Psoas muscle (tissue), 8 donors: ENCODE measurements at regions of chr2 and their contacts with region 1.

Region 1: DNA sequence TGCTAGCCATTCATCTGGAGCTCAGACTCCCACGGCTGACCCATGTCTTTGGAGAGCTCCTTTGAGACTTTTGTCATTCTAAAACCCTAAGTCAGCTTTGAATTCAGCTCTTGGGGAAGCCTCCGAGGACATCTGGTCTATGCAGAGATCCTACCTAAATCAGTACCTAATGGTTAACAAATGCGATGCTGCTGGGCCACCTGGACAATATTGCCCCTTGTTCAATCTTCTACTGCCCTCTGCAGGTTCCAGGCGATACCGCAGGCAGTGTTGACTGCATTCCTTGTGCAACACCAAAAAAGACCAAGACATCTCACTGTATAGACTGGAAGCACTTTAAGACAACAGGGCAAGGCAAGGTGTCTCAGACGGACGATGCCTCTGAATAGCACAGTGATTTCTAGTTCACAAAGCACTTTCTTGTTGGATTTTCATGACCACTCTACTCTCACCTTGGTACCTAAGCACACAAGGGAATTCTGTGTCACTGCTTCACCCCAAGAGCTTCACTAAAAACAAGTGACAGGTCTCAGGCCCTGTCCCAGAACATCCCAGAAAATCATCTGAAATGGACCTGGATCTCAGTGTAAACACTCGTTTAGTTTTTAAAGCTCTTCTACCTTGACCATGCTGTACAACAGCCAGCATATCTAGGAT is 80.9 kb downstream of the XDH start:
- DNase-seq: peak; percentile 70 to 86
- ATAC-seq: peak; percentile 84 to 95 (median 92)
- H3K4me3 ChIP-seq: no peak overlapping the region
- H3K27ac ChIP-seq: peak overlapping the region; percentile 50
- H3K4me1 ChIP-seq: peaks cover 5% of the 10 kb centered on the region
- H3K27me3 ChIP-seq: no peaks in the 10 kb centered on the region
- CTCF ChIP-seq: peak; percentile 97

Region 2: DNA sequence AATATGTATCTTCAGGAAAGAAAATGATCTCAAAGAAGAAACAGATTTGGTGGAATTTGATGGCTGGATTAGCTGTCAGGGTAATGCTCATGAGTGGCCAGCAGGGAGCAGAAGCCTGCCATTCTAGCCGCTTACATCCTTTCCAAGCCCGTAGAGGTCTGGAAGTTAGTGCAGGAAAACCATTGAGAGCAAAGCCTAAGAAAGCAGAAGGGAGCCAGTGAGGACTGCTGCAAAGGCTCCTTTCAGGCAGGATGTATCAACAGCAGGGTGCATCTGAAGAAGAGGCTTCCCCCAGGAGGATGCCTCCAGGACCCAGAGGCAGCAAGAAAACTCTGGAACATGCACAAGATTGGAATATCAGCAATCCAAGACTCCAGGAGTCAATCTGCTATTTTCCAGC is 1125.2 kb before region 1 on chr2:
- intact Hi-C with region 1: loop called in 1 of 2 experiments (anchors 10 kb)
- DNase-seq: peak; percentile 51 to 63
- ATAC-seq: peak; percentile 81 to 96 (median 88)
- H3K4me3 ChIP-seq: no peak overlapping the region
- H3K27ac ChIP-seq: no peak overlapping the region
- H3K4me1 ChIP-seq: no peaks in the 10 kb centered on the region
- H3K27me3 ChIP-seq: peaks cover 0 to 2% (median 0%) of the 10 kb centered on the region in 3 donors
- CTCF ChIP-seq: peak; percentile 92

Region 3: DNA sequence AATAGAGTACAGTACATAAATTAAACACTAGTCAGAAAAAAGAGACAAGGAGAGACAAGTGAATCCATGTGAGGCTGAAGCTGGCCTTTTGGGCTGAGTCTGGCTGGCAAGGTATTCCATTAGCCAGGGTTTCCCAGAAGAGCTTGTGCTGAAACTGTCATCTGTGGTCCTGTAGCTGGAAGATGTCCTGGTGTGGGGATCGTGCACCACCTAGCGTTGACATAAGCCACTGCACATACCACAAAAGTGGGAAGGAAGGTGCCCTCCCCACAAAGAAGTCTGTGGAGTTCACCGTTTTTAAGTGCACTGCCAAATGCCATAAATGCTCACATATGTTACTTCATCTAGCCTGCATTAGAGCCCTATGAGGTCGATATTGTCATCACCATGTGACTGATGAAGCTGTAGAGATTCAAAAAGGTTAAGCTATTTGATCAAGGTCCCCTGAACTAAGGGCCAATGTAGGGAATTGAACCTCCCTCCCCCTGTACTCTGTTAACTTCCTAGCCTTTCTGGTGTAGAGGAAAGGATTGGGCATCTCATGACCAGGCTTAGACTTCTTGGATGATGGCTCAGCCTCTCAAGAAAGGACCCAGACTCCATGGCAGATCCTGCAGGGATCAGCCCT is 163.5 kb before region 1 on chr2:
- intact Hi-C with region 1: loop called in 1 of 2 experiments (anchors 2 kb)
- DNase-seq: peak; percentile 37 to 67
- ATAC-seq: peak; percentile 77 to 91 (median 88)
- H3K4me3 ChIP-seq: no peak overlapping the region
- H3K27ac ChIP-seq: no peak overlapping the region
- H3K4me1 ChIP-seq: no peaks in the 10 kb centered on the region
- H3K27me3 ChIP-seq: no peaks in the 10 kb centered on the region
- CTCF ChIP-seq: peak; percentile 91

Region 4: DNA sequence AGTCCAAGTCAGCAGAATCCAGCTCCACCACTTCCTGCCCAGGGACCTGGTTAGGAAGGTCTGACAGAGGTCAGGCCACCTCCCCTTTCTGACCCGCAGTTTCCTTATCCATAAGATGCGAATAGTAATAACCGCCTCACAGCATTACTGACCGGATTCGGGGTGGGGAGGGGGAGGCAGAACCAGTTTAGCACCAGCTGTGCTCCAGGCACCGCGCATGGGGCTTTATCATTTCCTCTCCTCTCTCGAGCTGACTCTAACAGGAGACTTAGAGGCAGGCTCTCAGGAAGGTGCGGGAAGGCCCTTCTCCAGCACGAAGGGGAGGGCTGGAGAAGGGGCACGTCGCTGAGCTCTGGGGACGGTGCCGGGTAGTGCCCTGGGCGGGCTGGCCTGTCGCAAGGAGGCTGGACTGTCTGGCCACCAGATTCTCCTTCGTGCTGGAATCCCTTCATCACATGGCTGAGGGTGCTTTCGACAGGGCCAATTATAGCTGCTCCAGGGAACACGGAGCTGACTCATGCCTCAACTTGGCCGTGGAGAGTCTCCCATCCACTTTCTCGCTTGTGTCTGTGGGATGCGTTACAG is 94.0 kb before region 1 on chr2:
- intact Hi-C with region 1: loop called (anchors 2 to 5 kb)
- DNase-seq: peak; percentile 73 to 89
- ATAC-seq: peak; percentile 87 to 94 (median 90)
- H3K4me3 ChIP-seq: no peak overlapping the region
- H3K27ac ChIP-seq: peak overlapping the region; percentile 84
- H3K4me1 ChIP-seq: peaks cover 40% of the 10 kb centered on the region
- H3K27me3 ChIP-seq: peaks cover 0 to 3% (median 0%) of the 10 kb centered on the region in 3 donors
- CTCF ChIP-seq: no peak